ENCODE measurements at regions of chr4 and their contacts with region 1.

Region 1: GRCh38 chr4:113763029-113763285 is 1.4 kb upstream of the CAMK2D start:
- DNase-seq: no peak
- H3K27ac ChIP-seq: peak overlapping the region; percentile 100
- CTCF ChIP-seq: no peak

Region 2: DNA sequence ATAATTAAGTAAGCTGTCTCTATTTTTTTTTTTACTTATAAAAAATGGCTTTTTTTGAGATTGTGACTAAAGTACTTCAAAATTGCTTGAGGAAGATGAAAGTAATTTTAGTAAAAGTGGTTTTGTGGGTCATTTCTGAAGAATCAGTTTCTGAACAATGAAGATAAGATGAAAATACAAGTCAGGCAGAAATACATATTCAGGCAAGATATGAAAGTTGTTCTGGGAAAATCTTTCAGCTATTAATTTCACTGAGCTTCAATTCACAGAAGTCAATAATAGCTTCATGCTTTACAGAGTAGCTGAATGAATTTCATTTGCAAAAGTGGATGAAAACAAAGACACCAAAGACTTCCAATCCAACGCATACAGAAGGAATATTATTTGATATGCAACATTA is 521.7 kb after region 1 on chr4:
- CTCF ChIA-PET with region 1: interaction called, 11 read pairs
- POLR2A ChIA-PET with region 1: no interaction called
- DNase-seq: no peak
- H3K27ac ChIP-seq: no peak overlapping the region
- CTCF ChIP-seq: no peak

Measured in RWPE1 (cell line).